Activated CD4-positive, alpha-beta memory T cell treated with anti-CD3 and anti-CD28 coated beads, Interleukin-2, amount 10 ng/mL, durations not matched to agents 7 days and 5 days (primary cell): ENCODE measurements at regions of chr7 and their contacts with region 1.

Region 1: DNA sequence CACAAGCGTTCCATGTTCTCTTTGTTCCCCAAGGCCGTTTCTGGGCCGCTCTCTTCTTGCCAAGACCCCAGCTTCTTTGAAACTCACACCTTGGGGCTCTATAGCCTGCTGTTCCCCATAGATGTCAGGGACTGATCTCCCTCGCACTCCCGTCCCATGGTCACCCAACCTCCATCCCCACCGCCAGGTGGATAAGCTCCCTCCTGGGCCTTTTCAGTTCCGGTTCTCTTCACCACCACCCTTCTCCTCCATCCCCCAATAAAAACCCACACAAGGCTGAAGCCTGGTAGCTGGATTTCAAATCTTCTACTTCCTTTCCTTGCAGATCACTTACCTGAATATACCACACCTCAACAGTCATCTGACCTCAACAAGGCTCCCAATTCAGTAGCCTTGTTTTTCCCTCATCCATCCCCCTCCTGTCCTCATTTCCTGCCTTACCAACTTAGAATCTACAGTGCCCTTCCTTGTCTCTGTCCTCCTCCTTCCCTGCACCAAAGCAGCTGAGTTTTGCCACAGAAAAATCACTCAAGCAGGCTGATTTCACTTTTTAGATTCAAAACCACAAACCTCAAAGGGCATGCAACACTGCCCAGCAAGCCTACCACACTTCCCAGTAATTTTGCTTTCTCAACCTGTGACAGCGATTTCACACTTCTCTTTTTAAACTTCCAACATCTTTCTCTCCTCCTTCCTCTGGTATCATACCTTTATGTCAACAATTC is 7.7 kb downstream of the SLC37A3 start:
- DNase-seq: no peak
- H3K4me3 Mint-ChIP-seq: no peak overlapping the region
- H3K27ac Mint-ChIP-seq: no peak overlapping the region
- H3K4me1 Mint-ChIP-seq: peaks cover 14% of the 10 kb centered on the region
- H3K27me3 Mint-ChIP-seq: no peaks in the 10 kb centered on the region

Region 2: GRCh38 chr7:140403878-140404564 is 13.4 kb after region 1 on chr7 and contains the start of gene RAB19:
- CTCF ChIA-PET with region 1: no interaction called
- POLR2A ChIA-PET with region 1: interaction called, 18 read pairs
- DNase-seq: peak; percentile 53
- H3K4me3 Mint-ChIP-seq: peak within 1 kb of the TSS; percentile 85
- H3K27ac Mint-ChIP-seq: peak within 1 kb of the TSS; percentile 82
- H3K4me1 Mint-ChIP-seq: peaks cover 38% of the 10 kb centered on the region
- H3K27me3 Mint-ChIP-seq: no peaks in the 10 kb centered on the region
- total RNA-seq, gene RAB19: 4.3 to 4.8 TPM